Activated CD8-positive, alpha-beta T cell treated with anti-CD3 and anti-CD28 coated beads, Interleukin-2, amount 10 ng/mL, durations not matched to agents 7 days and 5 days (primary cell): ENCODE measurements at regions of chr20 and their contacts with region 1.

Region 1: DNA sequence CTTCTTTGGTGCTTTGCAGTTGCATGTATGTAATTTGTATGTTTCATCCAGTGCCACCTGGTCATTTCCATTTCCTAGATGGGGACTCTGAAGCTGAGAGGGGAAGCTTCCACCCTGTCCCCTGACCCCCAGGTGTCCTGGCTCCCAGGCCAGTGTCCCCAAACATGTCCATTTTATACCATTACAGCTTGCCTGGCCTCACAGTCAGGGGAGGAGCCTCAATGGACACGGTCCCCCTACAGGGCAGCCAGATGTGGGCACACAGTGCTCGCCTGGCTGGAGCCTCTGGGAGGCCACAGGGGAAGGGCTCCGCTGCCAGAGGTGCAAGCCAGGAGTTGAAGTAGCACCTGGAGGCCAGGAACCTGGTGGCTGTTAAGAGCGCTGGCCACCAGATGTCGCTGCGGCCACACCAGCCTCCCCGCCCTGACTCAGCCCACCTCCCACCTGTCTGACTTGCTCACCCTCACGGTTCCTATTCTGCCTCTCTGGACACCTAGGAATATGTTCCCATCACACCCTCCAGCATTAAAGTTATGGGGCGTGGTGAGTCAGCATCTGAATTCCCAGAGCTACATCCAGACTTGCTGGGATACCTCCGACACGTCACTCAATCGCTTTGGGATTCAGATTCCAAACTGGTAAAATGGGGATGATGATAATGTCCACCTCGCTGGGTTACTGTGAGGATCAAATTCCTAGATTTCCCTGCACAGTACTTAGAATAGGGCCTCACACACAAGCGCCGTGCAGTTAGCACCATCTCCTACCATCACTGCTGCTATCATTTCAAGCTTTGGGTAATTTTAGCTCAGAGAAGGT is 107.4 kb downstream of the SULF2 start:
- DNase-seq: peak; percentile 65
- ATAC-seq: peak; percentile 80
- H3K4me3 Mint-ChIP-seq: no peak overlapping the region
- H3K27ac Mint-ChIP-seq: no peak overlapping the region
- H3K4me1 Mint-ChIP-seq: peaks cover 4% of the 10 kb centered on the region
- H3K27me3 Mint-ChIP-seq: no peaks in the 10 kb centered on the region

Region 2: GRCh38 chr20:47648943-47649342 is 28.9 kb before region 1 on chr20:
- CTCF ChIA-PET with region 1: no interaction called
- POLR2A ChIA-PET with region 1: no interaction called
- DNase-seq: no peak
- ATAC-seq: no peak
- H3K4me3 Mint-ChIP-seq: no peak overlapping the region
- H3K27ac Mint-ChIP-seq: no peak overlapping the region
- H3K4me1 Mint-ChIP-seq: no peaks in the 10 kb centered on the region
- H3K27me3 Mint-ChIP-seq: no peaks in the 10 kb centered on the region

Region 3: GRCh38 chr20:47663333-47664067 is 14.3 kb before region 1 on chr20:
- CTCF ChIA-PET with region 1: interaction called, 10 read pairs
- POLR2A ChIA-PET with region 1: no interaction called
- DNase-seq: peak; percentile 85
- ATAC-seq: peak; percentile 85
- H3K4me3 Mint-ChIP-seq: no peak overlapping the region
- H3K27ac Mint-ChIP-seq: no peak overlapping the region
- H3K4me1 Mint-ChIP-seq: peaks cover 8% of the 10 kb centered on the region
- H3K27me3 Mint-ChIP-seq: no peaks in the 10 kb centered on the region

Region 4: GRCh38 chr20:48081898-48082715 is 404.3 kb after region 1 on chr20:
- CTCF ChIA-PET with region 1: no interaction called
- POLR2A ChIA-PET with region 1: no interaction called
- DNase-seq: no peak
- ATAC-seq: no peak
- H3K4me3 Mint-ChIP-seq: no peak overlapping the region
- H3K27ac Mint-ChIP-seq: no peak overlapping the region
- H3K4me1 Mint-ChIP-seq: no peaks in the 10 kb centered on the region
- H3K27me3 Mint-ChIP-seq: peaks cover 6% of the 10 kb centered on the region